Left ventricle myocardium superior (tissue), 1 donor: ENCODE measurements at regions of chr17 and their contacts with region 1.

Region 1: DNA sequence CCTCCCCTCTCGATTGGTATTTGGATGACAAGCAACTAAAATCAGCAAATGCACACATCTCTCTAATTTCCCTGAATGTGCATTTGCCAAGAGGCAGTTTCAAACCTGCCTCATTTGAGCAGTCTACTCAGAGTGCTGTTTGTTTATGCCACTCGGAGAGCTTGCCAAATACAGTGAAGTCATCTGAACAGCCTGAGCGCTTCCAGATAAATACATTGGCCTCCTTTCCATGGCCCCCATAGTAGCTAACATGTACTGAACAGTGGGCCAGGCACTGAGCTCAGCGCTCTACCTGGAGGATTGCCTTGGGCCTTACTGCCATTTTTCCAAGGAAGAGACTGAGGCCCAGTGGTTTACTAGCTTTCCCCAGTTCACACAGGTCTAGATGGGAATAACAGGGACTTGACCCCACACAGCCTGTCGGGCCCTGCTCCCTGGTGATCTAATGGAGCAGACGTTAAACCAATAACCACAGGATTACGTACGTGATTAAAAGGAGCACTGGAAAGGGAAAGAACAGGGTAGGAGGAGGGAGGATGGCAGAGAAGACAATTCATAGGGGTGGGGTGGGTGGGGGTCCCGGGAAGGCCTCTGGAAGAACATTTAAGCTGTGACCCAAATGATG is 18.7 kb upstream of the ANKRD40CL start:
- DNase-seq: no peak
- ATAC-seq: peak; percentile 87

Region 2: GRCh38 chr17:50834429-50835300 is 48.6 kb after region 1 on chr17:
- intact Hi-C with region 1: loop called (anchors 5 kb)
- DNase-seq: no peak
- ATAC-seq: peak; percentile 25